KBM-7 (cell line): ENCODE measurements at regions of chr15 and their contacts with region 1.

Region 1: DNA sequence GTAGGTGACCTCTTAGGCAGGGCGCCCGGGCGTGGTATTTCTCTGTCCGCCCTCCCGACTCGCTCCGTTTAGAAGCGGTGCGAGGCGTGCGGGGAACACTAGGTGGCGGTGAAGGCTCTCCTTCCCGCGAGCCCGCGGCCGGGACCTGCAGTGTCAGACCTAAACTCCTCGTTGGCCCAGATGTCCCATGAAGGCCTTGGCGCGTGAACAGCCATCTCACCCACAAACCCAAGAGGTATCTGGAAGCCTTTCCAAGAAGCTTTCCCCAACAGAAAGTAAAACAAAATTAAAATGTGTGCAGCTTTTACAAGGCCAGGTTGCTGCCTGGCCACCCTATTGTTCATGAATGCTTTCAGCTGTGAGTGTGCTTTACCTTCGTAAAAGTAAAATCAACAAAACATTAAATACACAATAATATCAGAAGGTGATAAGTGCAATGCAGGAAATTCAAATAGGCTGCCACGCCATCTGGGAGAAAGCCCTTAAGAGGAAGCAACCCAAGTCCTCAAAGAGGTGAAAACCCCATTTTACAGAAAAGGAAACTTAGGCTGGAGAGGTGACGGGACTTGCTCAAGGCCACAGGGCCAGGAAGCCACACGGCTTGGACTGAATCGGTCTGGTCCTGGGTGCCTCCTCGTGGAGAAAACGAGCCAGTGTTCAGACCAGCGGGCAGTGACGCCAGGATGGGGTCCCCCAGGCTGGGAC is 120.3 kb downstream of the ETFA start:
- DNase-seq: peak; percentile 93

Region 2: GRCh38 chr15:75884041-75884440 is 306.9 kb before region 1 on chr15:
- in situ Hi-C with region 1: no loop called
- DNase-seq: no peak

Region 3: DNA sequence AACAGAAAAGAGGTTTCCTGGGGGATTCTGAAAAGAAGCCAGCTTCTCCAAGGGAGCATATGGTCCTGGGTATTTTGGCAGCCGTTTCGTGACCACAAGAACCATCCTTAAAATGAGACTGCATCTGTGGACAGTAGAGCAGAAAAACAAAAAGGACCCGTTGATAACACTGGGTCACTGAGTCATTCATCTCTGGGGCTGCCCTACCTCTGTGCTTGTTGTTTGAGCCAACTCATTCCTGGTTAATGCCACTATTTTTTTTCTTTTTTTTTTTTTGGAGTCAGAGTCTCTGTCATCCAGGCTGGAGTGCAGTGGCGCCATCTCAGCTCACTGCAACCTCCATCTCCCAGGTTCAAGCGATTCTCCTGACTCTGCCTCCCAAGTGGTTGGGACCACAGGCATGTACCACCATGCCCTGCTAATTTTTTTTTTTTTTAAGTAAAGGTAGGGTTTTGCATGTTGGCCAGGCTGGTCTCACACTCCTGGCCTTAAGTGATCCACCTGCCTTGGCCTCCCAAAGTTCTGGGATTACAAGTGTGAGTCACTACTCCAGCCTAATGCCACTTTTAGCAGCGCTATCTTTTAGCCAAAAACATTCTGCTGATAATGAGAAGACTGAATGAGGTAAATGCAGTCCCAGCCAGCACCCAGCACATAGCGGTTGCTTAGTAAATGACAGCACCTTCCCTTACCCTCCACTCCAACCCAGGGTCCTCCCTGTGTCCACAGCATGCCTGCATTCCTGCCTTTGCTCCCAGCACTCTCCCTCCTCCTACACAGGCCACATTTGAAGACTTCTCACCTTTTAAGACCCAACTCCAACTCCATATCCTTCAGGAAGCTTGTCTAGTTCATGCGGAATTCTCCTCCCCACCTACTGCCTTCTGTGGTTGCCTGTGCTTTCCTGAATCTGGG is 136.5 kb after region 1 on chr15:
- in situ Hi-C with region 1: loop called (anchors 10 kb)
- DNase-seq: no peak

Region 4: DNA sequence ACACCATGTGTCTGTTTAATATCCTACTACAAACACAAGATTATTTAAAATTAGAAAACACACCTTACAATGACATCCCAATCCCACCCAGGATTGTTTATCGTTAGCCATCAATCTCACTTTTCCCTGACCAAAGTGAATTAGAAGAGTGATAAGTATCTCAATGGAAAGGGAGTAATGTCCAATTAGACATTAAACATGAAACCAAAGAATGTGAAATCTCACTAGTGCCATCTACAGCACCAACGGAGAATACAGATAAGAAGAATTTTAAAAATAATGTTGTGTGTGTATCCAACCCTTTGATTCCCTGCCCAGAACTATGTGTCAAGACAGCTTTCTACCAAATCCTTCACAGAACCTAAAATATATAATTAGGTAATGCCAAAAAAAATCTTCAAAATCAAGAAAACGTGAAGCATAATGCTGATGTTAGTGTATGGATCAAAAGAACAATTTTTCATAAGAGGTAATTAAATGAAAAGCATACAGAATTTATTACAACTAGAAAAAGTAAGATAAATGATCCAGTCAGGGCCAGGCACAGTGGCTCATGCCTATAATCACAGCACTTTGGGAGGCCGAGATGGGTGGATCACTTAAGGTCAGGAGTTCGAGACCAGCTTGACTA is 650.0 kb after region 1 on chr15:
- in situ Hi-C with region 1: loop called (anchors 25 kb)
- DNase-seq: peak; percentile 73